ENCODE measurements at regions of chr12 and their contacts with region 1.

Region 1: GRCh38 chr12:91326058-91327027 is 143.7 kb upstream of the DCN start:
- DNase-seq: peak; percentile 59
- H3K4me3 ChIP-seq: no peak overlapping the region
- H3K27ac ChIP-seq: no peak overlapping the region
- H3K4me1 ChIP-seq: no peaks in the 10 kb centered on the region
- H3K27me3 ChIP-seq: no peaks in the 10 kb centered on the region
- CTCF ChIP-seq: peak; percentile 49 to 54
- POLR2A ChIP-seq: no peak

Region 2: DNA sequence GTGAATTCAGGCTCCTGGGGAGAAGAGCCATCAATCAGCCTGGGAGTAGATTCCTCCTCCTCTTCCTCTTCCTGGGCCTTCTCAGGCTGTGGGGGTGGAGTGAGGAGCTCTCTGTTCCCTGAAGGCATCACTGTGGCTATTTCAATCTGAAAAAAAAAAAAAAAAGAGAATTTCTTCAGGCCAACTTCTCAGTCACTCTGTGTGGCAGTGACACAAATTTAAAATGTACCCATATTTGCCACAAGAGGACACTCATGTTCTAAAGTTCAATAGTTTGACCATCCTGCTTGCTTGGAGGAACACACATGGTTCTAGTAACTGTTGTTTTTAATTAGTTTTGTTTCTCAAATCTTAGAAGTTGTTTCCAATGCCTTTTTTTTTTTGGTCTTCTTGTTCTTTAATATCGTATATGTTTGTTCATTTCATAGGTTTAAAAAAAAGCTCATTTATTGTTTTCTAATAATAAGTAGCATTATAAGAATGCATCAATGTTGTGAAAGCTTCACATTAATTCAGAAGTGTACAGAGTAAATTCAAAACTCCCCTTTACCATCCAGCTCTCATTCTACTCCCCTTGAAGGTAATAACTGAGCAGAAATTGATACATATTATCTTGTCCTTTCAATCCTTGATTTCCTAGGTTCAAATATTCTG is 348.1 kb before region 1 on chr12:
- CTCF ChIA-PET with region 1: interaction called, 87 read pairs
- POLR2A ChIA-PET with region 1: no interaction called
- dilution Hi-C with region 1: no loop called
- intact Hi-C with region 1: loop called (anchors 1 kb)
- DNase-seq: peak; percentile 70
- H3K4me3 ChIP-seq: no peak overlapping the region
- H3K27ac ChIP-seq: no peak overlapping the region
- H3K4me1 ChIP-seq: no peaks in the 10 kb centered on the region
- H3K27me3 ChIP-seq: no peaks in the 10 kb centered on the region
- CTCF ChIP-seq: peak; percentile 37 to 49
- POLR2A ChIP-seq: no peak

Region 3: DNA sequence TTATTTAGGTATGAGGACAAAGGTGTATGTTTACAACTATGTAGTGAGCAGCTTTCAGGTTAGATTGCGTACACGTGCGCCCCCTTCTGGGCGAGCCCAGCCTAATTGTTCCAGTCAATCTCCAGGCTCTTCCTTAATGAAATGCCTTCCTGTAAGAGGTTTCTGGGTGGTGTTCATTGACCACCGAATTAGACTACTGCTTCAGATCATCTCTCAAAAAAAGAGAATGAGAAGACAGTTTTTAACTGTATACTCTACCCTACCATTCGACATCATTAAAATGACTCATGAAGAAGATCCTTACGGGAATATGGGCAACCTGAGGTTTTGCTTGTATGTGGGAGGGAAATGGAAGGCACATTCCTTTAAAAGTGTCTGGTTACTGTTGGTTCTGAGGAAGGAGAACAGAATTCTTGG is 217.2 kb before region 1 on chr12:
- CTCF ChIA-PET with region 1: interaction called, 26 read pairs
- POLR2A ChIA-PET with region 1: no interaction called
- dilution Hi-C with region 1: no loop called
- intact Hi-C with region 1: loop called (anchors 2 kb)
- DNase-seq: peak; percentile 74
- H3K4me3 ChIP-seq: no peak overlapping the region
- H3K27ac ChIP-seq: no peak overlapping the region
- H3K4me1 ChIP-seq: peaks cover 2% of the 10 kb centered on the region
- H3K27me3 ChIP-seq: no peaks in the 10 kb centered on the region
- CTCF ChIP-seq: peak; percentile 67 to 69
- POLR2A ChIP-seq: no peak

Region 4: GRCh38 chr12:91189516-91189915 is 136.8 kb before region 1 on chr12:
- CTCF ChIA-PET with region 1: no interaction called
- POLR2A ChIA-PET with region 1: no interaction called
- dilution Hi-C with region 1: no loop called
- intact Hi-C with region 1: no loop called
- DNase-seq: no peak
- H3K4me3 ChIP-seq: no peak overlapping the region
- H3K27ac ChIP-seq: no peak overlapping the region
- H3K4me1 ChIP-seq: no peaks in the 10 kb centered on the region
- H3K27me3 ChIP-seq: no peaks in the 10 kb centered on the region
- CTCF ChIP-seq: no peak
- POLR2A ChIP-seq: no peak

Region 5: DNA sequence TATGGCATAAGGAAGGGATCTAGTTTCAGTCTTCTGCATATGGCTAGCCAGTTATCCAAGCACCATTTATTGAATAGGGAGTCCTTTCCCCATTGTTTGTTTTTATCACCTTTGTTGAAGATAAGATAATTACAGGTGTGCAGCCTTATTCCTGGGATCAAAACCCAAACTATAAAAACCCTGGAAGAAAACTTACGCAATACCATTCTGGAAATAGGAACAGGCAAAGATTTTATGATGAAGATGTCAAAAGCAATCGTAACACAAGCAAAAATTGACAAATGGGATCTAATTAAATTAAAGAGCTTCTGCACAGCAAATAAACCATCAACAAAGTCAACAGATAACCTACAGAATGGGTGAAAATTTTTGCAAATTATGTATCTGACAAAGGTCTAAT is 15.3 kb before region 1 on chr12:
- CTCF ChIA-PET with region 1: interaction called, 18 read pairs
- POLR2A ChIA-PET with region 1: no interaction called
- dilution Hi-C with region 1: no loop called
- intact Hi-C with region 1: no loop called
- DNase-seq: no peak
- H3K4me3 ChIP-seq: no peak overlapping the region
- H3K27ac ChIP-seq: no peak overlapping the region
- H3K4me1 ChIP-seq: no peaks in the 10 kb centered on the region
- H3K27me3 ChIP-seq: peaks cover 0 to 2% of the 10 kb centered on the region in 2 experiments
- CTCF ChIP-seq: no peak
- POLR2A ChIP-seq: no peak

Region 6: GRCh38 chr12:91355150-91356006 is 29.0 kb after region 1 on chr12:
- CTCF ChIA-PET with region 1: interaction called, 31 read pairs
- POLR2A ChIA-PET with region 1: no interaction called
- dilution Hi-C with region 1: no loop called
- intact Hi-C with region 1: no loop called
- DNase-seq: peak; percentile 75
- H3K4me3 ChIP-seq: no peak overlapping the region
- H3K27ac ChIP-seq: no peak overlapping the region
- H3K4me1 ChIP-seq: peaks cover 4% of the 10 kb centered on the region
- H3K27me3 ChIP-seq: no peaks in the 10 kb centered on the region
- CTCF ChIP-seq: peak; percentile 83 to 87
- POLR2A ChIP-seq: no peak